PC-3 (cell line): ENCODE measurements at regions of chr4 and their contacts with region 1.

Region 1: DNA sequence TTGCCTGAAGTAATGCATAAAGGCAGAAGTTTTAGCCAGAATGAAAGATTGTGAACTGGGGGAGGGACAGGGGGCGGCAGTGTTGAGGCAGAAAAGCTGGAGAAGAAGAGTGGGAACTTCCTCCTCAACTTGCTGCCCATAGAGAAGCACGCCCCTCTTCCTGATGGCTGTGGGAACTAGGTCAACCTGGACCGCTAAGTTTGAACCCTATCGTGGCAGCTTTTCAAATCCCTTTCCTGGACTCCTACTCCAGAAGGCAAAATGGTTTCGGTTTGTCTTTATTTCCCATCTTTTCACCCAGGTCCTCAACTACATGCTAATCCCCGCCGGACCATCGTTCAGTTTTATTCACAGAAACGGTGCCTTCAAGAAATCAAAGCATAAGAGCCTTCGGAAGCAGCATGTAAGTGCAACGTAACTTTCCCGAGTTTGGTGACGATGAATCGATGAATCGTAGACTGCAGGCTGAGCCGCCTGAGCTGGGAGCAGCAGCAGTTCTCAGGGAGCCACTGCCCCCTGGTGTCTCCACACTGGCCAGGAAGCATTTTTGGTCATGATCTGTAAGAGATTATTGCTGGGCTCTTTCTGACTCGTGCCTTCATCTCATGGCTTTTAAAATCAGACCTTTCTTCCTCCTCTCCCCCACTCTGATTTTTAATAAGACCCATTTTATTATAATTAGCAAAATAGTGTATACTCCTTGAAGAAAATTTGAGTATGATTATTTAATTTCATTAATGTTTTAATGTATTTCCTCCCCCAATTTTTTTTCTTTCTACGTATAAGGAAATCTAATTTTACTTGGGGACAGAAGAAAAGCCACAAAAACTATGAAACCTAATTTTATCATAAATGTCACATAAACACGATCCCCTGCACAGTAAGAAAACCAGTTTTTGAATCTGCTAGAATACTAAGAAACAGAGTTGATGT is 21.4 kb downstream of the SPINK2 start:
- DNase-seq: peak; percentile 91
- ATAC-seq: peak; percentile 99
- H3K4me3 ChIP-seq: peak overlapping the region; percentile 72
- H3K27ac ChIP-seq: no peak overlapping the region
- H3K4me1 ChIP-seq: no peaks in the 10 kb centered on the region
- H3K27me3 ChIP-seq: no peaks in the 10 kb centered on the region
- CTCF ChIP-seq: peak; percentile 97

Region 2: GRCh38 chr4:56424697-56425514 is 375.2 kb before region 1 on chr4:
- CTCF ChIA-PET with region 1: no interaction called
- POLR2A ChIA-PET with region 1: no interaction called
- intact Hi-C with region 1: loop called (anchors 1 kb)
- DNase-seq: peak; percentile 61
- ATAC-seq: peak; percentile 59
- H3K4me3 ChIP-seq: no peak overlapping the region
- H3K27ac ChIP-seq: no peak overlapping the region
- H3K4me1 ChIP-seq: no peaks in the 10 kb centered on the region
- H3K27me3 ChIP-seq: no peaks in the 10 kb centered on the region
- CTCF ChIP-seq: peak; percentile 93

Region 3: GRCh38 chr4:56544573-56545131 is 255.4 kb before region 1 on chr4:
- CTCF ChIA-PET with region 1: no interaction called
- POLR2A ChIA-PET with region 1: no interaction called
- intact Hi-C with region 1: loop called (anchors 1 kb)
- DNase-seq: peak; percentile 95
- ATAC-seq: peak; percentile 97
- H3K4me3 ChIP-seq: peak overlapping the region; percentile 69
- H3K27ac ChIP-seq: no peak overlapping the region
- H3K4me1 ChIP-seq: peaks cover 5% of the 10 kb centered on the region; the same call in 1 of the 2 replicates
- H3K27me3 ChIP-seq: no peaks in the 10 kb centered on the region
- CTCF ChIP-seq: peak; percentile 99

Region 4: DNA sequence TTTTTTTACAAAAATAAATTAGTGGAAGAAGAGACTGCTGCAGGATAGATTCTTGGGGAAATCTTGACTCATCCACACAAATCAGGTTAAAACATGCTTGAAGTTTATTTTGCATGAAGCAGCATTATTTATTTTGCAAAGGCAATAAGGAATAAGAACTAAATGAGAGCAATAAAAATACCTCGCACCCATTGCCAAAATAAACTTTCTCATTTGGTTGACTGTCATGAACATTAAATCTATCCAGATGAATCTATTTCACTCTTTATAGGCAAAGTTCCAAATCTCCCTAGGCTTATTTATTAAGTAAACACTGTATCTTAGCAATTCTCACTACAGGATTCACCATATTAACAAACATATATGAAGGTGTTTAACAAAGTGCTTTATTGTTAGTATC is 177.9 kb before region 1 on chr4:
- CTCF ChIA-PET with region 1: interaction called, 9 read pairs
- POLR2A ChIA-PET with region 1: no interaction called
- intact Hi-C with region 1: loop called (anchors 1 kb)
- DNase-seq: peak; percentile 88
- ATAC-seq: peak; percentile 76
- H3K4me3 ChIP-seq: no peak overlapping the region
- H3K27ac ChIP-seq: peak overlapping the region; percentile 66
- H3K4me1 ChIP-seq: peaks cover 26% of the 10 kb centered on the region
- H3K27me3 ChIP-seq: no peaks in the 10 kb centered on the region
- CTCF ChIP-seq: no peak

Region 5: DNA sequence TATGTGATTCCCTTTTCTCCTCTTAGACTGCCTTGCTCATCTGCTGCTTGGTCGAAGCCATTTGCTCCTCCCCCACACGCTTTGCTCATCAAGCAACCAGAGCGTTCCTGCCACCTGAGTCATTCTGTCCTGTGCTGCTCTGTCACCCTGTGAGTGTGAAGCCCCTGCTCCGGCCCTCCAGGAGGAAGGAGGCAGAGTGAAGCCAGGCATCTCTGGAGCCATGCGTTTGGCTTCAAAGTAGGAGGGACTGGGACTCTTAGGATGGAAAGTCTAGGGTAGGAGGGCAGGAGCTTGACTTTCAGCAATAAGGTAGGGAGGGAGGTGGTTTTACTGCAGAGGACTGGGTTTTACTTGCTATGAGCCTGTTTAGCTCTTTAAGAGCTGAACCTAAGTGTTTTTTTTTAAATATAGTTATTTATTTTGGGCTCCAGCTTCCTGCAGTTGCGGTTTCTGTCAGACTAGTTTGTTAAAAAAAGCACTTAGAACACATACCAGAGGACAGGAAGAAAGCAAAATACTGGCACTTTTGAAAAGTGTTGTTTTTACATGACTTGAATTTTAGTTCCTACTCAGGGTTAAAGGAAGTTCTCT is 42.2 kb before region 1 on chr4:
- CTCF ChIA-PET with region 1: interaction called, 3 read pairs
- POLR2A ChIA-PET with region 1: no interaction called
- intact Hi-C with region 1: loop called (anchors 2 kb)
- DNase-seq: peak; percentile 98
- ATAC-seq: peak; percentile 89
- H3K4me3 ChIP-seq: peak overlapping the region; percentile 43
- H3K27ac ChIP-seq: peak overlapping the region; percentile 74
- H3K4me1 ChIP-seq: peaks cover 39% of the 10 kb centered on the region
- H3K27me3 ChIP-seq: no peaks in the 10 kb centered on the region
- CTCF ChIP-seq: no peak

Region 6: GRCh38 chr4:56840559-56840958 is 40.5 kb after region 1 on chr4:
- CTCF ChIA-PET with region 1: interaction called, 8 read pairs
- POLR2A ChIA-PET with region 1: interaction called, 5 read pairs
- intact Hi-C with region 1: loop called (anchors 1 kb)
- DNase-seq: no peak
- ATAC-seq: no peak
- H3K4me3 ChIP-seq: no peak overlapping the region
- H3K27ac ChIP-seq: no peak overlapping the region
- H3K4me1 ChIP-seq: no peaks in the 10 kb centered on the region
- H3K27me3 ChIP-seq: no peaks in the 10 kb centered on the region
- CTCF ChIP-seq: no peak

Region 7: GRCh38 chr4:56856656-56857055 is 56.6 kb after region 1 on chr4:
- CTCF ChIA-PET with region 1: no interaction called
- POLR2A ChIA-PET with region 1: no interaction called
- intact Hi-C with region 1: no loop called
- DNase-seq: no peak
- ATAC-seq: no peak
- H3K4me3 ChIP-seq: no peak overlapping the region
- H3K27ac ChIP-seq: no peak overlapping the region
- H3K4me1 ChIP-seq: no peaks in the 10 kb centered on the region
- H3K27me3 ChIP-seq: no peaks in the 10 kb centered on the region
- CTCF ChIP-seq: no peak